ENCODE measurements at regions of chr18 and their contacts with region 1.

Region 1: GRCh38 chr18:48913201-48913600 is 37.6 kb downstream of the SMAD7 start:
- DNase-seq: no peak
- H3K4me3 ChIP-seq: no peak overlapping the region
- H3K27ac ChIP-seq: no peak overlapping the region
- H3K4me1 ChIP-seq: peaks cover 0 to 8% (median 0%) of the 10 kb centered on the region in 4 donors
- H3K27me3 ChIP-seq: no peaks in the 10 kb centered on the region
- CTCF ChIP-seq: peak; percentile 20 to 46 (median 34)
- EP300 ChIP-seq: no peak
- POLR2A ChIP-seq: no peak

Region 2: DNA sequence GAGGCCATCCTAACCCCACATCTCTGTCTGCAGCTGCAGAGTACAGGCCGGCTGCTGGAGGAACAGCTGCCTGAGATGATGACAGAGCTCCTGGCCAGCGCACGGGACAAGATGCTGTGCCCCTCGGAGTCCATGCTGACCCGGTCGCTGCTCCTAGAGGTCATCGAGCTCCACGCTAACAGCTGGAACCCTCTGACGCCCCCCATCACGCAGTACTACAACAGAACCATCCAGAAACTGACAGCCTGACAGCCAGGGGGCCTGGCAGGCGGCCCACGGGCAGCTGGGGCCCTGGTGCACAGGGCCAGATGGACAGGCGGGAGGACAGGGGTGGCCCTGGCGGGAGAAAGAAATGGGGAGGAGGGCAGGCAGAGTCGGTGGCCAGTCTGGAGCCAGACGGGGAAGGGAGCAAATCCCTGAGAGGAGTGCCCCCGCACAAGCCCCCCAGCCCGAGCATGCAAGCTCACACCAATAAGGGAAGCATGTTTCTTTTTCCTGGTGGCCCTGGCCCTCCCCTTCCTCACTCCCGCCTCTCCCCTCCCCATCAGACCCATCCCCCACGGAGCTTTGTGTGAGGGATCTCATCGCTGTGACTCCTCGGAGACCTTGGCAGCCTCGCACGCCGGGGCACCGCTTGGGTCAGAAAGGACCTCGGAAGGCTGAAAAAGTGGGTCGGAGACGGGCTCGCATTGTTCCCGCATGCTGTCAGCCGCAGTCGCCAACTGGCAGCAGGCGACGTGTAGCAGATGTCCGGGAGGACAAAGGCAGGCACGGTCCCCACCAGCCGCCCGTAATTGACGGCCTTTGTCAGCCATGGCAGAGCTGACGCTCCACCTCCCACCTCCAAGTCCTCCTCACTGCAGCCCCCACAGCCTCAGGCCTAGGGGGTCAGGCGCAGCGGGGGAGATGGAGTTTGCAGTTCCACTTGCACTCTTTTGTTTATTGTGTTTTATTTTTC is 53.6 kb before region 1 on chr18:
- in situ Hi-C with region 1: no loop called
- intact Hi-C with region 1: no loop called
- DNase-seq: no peak
- H3K4me3 ChIP-seq: no peak overlapping the region
- H3K27ac ChIP-seq: no peak overlapping the region
- H3K4me1 ChIP-seq: no peaks in the 10 kb centered on the region
- H3K27me3 ChIP-seq: no peaks in the 10 kb centered on the region
- CTCF ChIP-seq: no peak
- EP300 ChIP-seq: no peak
- POLR2A ChIP-seq: no peak

Region 3: DNA sequence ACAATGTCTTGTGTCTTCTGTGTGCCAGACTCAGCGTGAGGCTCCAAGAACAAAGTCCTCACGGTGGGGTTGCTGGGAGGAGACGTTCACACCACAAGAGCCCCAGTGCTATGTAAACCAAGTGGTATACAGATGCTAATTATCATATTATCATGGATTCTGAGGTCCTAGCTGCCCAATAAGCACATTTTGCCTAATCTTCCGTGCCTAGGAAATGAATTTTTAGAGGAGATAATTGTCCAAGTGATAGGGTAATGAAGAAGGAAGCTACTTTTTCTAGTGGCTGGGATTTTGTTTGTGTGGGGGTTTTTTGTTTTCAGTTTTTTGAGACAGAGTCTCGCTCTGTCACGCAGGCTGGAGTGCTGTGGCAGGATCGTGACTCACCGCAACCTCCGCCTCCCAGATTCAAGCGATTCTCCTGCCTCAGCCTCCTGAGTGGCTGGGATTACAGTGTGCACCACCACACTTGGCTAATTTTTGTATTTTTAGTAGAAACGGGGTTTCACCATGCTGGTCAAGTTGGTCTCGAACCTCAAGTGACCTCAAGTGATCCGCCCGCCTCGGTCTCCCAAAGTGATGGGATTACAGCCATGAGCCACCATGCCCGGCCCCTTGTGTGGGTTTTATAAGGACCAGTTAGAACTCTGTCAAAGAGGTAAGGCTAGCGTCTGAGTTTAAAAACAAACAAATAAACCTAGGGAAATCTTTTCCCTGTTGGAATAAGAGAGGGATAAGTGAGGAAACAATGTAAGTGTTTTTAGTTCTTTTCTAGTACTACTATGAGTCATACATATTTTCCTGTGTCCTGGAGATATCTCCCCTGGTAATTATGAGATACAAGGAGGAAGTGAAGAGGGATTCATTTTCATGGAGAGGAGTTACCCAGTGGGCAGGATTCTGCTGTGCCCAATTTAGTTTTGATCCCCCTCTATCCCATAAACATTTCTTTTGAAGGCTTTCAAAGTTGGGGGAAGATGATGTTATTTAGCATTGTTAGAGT is 47.0 kb after region 1 on chr18:
- in situ Hi-C with region 1: loop called in 1 of 4 experiments (anchors 10 kb)
- intact Hi-C with region 1: no loop called
- DNase-seq: no peak
- H3K4me3 ChIP-seq: no peak overlapping the region
- H3K27ac ChIP-seq: no peak overlapping the region
- H3K4me1 ChIP-seq: peaks cover 9 to 20% (median 11%) of the 10 kb centered on the region in 4 donors
- H3K27me3 ChIP-seq: no peaks in the 10 kb centered on the region
- CTCF ChIP-seq: no peak
- EP300 ChIP-seq: no peak
- POLR2A ChIP-seq: no peak